HepG2 (cell line): ENCODE measurements at regions of chr17 and their contacts with region 1.

Region 1: DNA sequence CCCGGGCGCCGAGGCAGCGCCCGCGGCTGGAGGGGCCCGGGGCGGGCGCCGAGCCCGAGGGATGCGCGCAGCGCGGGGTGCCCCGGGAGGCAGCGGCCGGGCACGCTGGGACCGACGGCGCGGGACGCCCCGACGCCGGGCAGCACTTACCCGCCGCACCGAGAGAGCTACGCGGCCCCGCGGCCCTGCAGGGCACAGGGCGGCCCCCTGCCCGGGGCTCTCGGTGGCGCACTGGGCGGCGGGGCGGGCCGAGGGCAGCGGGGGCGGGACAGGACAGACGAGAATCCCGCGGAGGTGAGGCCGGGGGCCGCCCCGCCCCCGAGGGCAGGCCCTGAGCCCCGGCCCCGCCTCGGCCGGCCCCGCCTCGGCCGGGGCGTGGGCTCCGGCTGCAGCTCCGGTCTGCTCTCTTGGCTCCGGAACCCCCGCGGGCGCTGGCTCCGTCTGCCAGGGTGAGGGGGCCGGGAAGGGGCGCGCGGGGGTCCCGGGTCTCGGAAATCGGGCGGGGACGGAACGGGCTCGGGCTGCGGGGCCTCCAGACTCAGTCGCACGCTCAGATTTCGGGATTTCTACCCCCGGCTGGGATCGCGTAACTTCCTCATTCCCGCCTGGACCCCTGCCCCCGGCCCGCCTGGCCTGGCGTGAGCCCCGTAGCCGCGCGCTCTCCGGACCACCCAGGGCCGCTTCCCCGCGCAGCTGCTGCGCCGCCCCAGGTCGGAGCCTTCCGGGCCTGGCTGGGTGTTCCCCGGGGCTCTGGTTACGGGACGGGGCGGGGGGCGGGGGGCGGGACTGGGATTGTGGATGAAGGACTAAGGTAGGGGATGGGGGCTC is at the start of gene PLD2:
- DNase-seq: peak; percentile 69
- ATAC-seq: peak; percentile 97
- H3K4me3 ChIP-seq: peak within 1 kb of the TSS; percentile 80 to 96 (median 92)
- H3K27ac ChIP-seq: peak within 1 kb of the TSS; percentile 49
- H3K4me1 ChIP-seq: peaks cover 29% of the 10 kb centered on the region
- H3K27me3 ChIP-seq: no peaks in the 10 kb centered on the region
- CTCF ChIP-seq: no peak; the same call in 1 of the 2 replicates
- EP300 ChIP-seq: no peak
- POLR2A ChIP-seq: peak; percentile 74 to 81
- RAD21 ChIP-seq: peak; percentile 55; the same call in 1 of the 2 replicates
- total RNA-seq, gene PLD2: 7.8 and 13.4 TPM in 2 replicates

Region 2: GRCh38 chr17:4607773-4608187 is 199.2 kb before region 1 on chr17:
- CTCF ChIA-PET with region 1: no interaction called
- POLR2A ChIA-PET with region 1: no interaction called
- in situ Hi-C with region 1: no loop called
- intact Hi-C with region 1: no loop called
- DNase-seq: no peak
- ATAC-seq: no peak
- H3K4me3 ChIP-seq: no peak overlapping the region
- H3K27ac ChIP-seq: no peak overlapping the region
- H3K4me1 ChIP-seq: peaks cover 65% of the 10 kb centered on the region
- H3K27me3 ChIP-seq: no peaks in the 10 kb centered on the region
- CTCF ChIP-seq: no peak
- EP300 ChIP-seq: no peak
- POLR2A ChIP-seq: no peak
- RAD21 ChIP-seq: no peak

Region 3: DNA sequence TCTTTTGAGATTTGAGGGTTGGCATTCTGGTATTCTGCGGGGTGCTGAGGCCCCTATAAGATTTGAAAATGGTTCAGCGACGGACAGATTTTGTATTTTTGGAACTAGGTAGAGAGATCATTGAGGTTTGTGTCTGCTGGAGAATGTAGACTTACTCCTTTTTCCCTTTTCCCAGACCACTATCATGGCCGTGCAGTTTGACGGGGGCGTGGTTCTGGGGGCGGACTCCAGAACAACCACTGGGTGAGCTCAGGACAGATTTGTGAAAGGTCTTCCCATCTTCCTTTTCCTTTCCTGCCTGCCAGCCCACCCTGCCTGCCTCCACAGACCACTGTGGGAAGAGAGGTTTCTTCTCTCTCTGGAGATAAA is 10.5 kb before region 1 on chr17:
- CTCF ChIA-PET with region 1: no interaction called
- POLR2A ChIA-PET with region 1: interaction called, 26 read pairs
- in situ Hi-C with region 1: no loop called
- intact Hi-C with region 1: no loop called
- DNase-seq: peak; percentile 33
- ATAC-seq: peak; percentile 86
- H3K4me3 ChIP-seq: peak overlapping the region; percentile 85 to 97 (median 86)
- H3K27ac ChIP-seq: peak overlapping the region; percentile 79
- H3K4me1 ChIP-seq: peaks cover 17% of the 10 kb centered on the region
- H3K27me3 ChIP-seq: no peaks in the 10 kb centered on the region; a peak in 1 of 5 replicates
- CTCF ChIP-seq: no peak
- EP300 ChIP-seq: no peak
- POLR2A ChIP-seq: 0 out of 4 replicates have a peak, but pooled peaks of 1 of the 2 experiments have one; percentile 5
- RAD21 ChIP-seq: no peak

Region 4: GRCh38 chr17:4881761-4882555 is 75.0 kb after region 1 on chr17:
- CTCF ChIA-PET with region 1: interaction called, 4 read pairs
- POLR2A ChIA-PET with region 1: no interaction called
- in situ Hi-C with region 1: loop called (anchors 5 kb)
- intact Hi-C with region 1: no loop called
- DNase-seq: peak; percentile 41
- ATAC-seq: peak; percentile 90
- H3K4me3 ChIP-seq: no peak overlapping the region
- H3K27ac ChIP-seq: no peak overlapping the region
- H3K4me1 ChIP-seq: no peaks in the 10 kb centered on the region
- H3K27me3 ChIP-seq: no peaks in the 10 kb centered on the region
- CTCF ChIP-seq: peak; percentile 88
- EP300 ChIP-seq: no peak
- POLR2A ChIP-seq: no peak
- RAD21 ChIP-seq: peak; percentile 84